Gastrocnemius medialis (tissue), 4 donors: ENCODE measurements at regions of chr3 and their contacts with region 1.

Region 1: DNA sequence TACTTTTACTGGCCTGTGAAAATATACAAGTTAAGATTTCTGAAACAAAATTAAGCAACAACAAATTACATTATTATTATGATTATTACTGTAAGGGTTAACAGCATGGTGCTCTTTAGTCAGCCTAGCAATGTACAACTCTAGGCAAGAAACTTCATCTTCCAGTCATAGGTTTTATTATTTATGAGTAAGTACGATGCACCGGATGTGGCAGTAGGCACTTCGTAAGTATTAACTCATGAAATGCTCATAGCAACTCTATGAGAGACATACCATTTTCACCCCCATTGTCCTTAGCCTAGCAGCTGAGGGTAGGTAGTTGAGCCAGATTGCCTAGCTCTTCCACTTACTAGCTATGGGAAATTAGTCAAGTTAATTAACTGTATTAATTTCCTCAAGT is 68.0 kb upstream of the PTPRG start:
- DNase-seq: no peak
- ATAC-seq: no peak
- H3K4me3 ChIP-seq: no peak overlapping the region
- H3K27ac ChIP-seq: no peak overlapping the region
- H3K4me1 ChIP-seq: peaks cover 10 to 15% of the 10 kb centered on the region in 2 donors
- H3K27me3 ChIP-seq: no peaks in the 10 kb centered on the region
- CTCF ChIP-seq: no peak
- POLR2A ChIP-seq: no peak

Region 2: DNA sequence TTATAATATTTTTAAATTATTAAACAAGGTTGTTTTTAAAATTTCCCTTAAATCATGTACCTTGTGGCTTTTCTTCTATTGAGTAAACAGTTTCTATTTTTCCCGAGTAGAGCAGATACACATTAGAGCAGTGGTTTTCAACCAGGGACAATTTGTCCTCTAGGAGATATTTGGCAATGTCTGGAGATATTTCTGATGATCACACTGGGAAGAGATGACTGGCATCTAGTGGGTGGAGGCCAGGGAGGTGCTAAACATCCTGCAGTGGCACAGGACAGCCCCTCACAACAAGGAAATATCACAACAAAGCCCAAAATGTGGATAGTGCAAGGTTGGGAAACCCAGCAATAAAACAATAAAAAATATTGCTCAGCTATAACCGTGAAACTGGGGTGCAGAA is 45.0 kb before region 1 on chr3:
- in situ Hi-C with region 1: no loop called
- intact Hi-C with region 1: loop called (anchors 1 kb)
- DNase-seq: peak; percentile 12 to 50
- ATAC-seq: peak; percentile 98
- H3K4me3 ChIP-seq: no peak overlapping the region
- H3K27ac ChIP-seq: peak overlapping the region; percentile 71 to 80 (median 76)
- H3K4me1 ChIP-seq: peaks cover 24 to 34% of the 10 kb centered on the region in 2 donors
- H3K27me3 ChIP-seq: no peaks in the 10 kb centered on the region
- CTCF ChIP-seq: no peak
- POLR2A ChIP-seq: no peak